ENCODE measurements at regions of chr17 and their contacts with region 1.

Region 1: DNA sequence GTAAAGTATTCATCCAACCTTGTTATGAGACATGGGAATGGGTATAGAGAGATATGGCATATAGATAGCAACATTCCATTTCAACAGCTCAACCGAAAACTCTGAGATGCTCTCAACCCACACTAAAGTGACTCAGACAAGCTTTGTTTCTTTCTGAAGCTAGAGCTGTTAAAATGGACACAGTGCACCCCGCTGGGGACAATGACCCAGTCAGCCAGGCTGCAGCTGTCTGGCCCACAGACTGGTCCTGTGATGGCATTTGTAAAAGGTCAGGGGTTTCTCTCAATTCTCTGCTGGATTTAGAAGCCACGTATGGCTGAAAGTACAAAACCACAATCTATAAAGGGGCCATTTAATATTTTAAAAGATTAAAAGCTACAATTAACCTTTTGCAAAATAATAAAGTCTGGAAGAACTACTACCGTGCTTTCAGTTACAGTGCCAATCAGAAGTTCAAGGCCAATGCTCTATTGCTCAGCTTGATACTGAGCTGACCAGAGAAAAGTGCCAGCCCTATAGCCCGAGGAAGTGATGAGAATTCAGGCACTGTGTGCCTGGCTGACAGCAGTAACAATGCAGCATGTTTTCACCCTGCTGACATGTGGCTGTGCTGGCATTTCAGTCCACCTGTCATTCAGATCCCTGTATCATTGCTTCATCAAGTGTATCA is 60.2 kb downstream of the TEX2 start:
- DNase-seq: no peak
- ATAC-seq: peak in 7 of 8 donors; percentile 64 to 83 (median 74)
- H3K4me3 ChIP-seq: no peak overlapping the region
- H3K27ac ChIP-seq: peak overlapping the region in 9 of 10 donors; percentile 35 to 72 (median 53)
- H3K4me1 ChIP-seq: peaks cover 9 to 57% (median 40%) of the 10 kb centered on the region in 9 donors
- H3K27me3 ChIP-seq: no peaks in the 10 kb centered on the region
- CTCF ChIP-seq: no peak

Region 2: GRCh38 chr17:64145757-64146417 is 56.9 kb before region 1 on chr17:
- intact Hi-C with region 1: no loop called
- DNase-seq: peak; percentile 94 to 98
- ATAC-seq: peak; percentile 95 to 97 (median 96)
- H3K4me3 ChIP-seq: peak overlapping the region; percentile 64 to 94 (median 76)
- H3K27ac ChIP-seq: peak overlapping the region; percentile 85 to 99 (median 96)
- H3K4me1 ChIP-seq: peaks cover 6 to 45% (median 38%) of the 10 kb centered on the region in 9 donors
- H3K27me3 ChIP-seq: no peaks in the 10 kb centered on the region
- CTCF ChIP-seq: peak in 2 of 9 donors; percentile 9 to 28

Region 3: DNA sequence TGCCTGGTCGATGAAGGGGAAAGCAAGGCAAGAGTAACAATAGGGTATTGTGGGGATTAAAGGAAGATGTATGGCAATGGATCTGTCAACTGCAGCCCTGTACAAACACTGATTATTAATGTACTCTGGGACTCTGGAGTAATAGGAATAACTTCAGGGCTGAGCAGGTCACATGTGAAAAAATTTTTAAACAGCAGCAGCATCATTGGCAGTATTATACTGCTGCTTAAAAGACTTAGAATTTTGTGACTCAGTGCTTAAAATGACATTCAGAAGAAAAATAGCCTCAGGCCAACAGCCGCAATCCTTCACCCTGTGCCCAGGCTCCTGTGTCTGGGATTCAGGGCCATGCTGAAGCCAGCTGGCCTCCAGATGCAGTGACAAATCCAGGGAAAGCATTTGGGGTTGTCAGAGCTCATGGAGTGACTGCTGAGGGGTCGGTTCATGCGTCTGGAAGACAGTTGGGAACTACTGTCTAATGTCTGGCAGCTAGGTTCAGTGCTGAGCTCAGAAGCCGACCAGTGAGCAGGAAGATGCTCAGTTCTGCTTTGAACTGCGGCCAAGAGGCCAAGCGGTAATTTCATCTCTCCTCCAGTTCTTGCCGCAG is 38.0 kb after region 1 on chr17:
- intact Hi-C with region 1: loop called in 1 of 10 experiments (anchors 5 kb)
- DNase-seq: peak; percentile 34 to 58
- ATAC-seq: peak; percentile 45 to 85 (median 74)
- H3K4me3 ChIP-seq: no peak overlapping the region
- H3K27ac ChIP-seq: peak overlapping the region in 9 of 10 donors; percentile 50 to 83 (median 62)
- H3K4me1 ChIP-seq: peaks cover 8 to 64% (median 41%) of the 10 kb centered on the region in 9 donors
- H3K27me3 ChIP-seq: no peaks in the 10 kb centered on the region
- CTCF ChIP-seq: no peak

Region 4: DNA sequence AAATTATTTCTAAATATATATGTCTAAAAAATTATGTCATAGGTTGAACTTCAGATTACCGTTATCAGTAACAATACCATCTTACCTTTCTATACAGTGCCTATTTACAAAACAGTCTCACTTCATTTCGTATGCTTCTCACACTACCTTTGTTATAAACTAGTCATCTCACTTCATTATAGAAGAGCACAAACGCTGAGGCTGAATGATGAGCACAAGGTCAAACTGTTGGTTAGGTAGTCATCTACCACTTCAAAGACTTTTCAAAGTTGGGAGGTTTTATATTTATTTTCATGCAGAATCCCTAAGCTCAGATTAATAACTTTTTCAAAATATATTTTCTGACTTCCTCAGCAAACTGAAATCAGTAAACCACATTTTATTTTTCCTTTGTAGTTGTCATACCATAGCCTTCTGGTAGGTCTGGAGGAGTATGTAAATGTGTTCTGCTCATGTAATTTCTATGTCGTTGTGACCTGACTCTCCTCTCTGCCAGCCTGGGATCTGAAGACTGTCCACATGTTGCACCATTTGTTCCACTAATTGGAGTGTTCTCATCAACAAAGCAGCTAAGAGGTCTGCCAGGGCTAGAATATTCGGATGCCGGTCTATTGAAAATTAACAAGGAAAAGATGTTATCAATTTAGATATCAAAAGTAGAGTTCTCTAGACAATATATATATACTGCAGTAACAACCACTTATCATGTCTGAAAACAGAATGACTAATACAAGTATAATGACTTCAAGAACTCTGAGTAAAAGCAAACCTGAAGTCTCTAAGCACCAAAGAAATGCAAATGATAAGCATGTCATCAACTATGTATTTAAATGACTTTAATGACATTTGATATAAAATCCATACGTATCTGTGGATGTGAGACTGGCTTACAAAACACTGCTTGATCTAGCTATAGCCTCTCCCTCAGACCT is 377.8 kb after region 1 on chr17:
- intact Hi-C with region 1: no loop called
- DNase-seq: no peak
- ATAC-seq: no peak
- H3K4me3 ChIP-seq: no peak overlapping the region
- H3K27ac ChIP-seq: no peak overlapping the region
- H3K4me1 ChIP-seq: no peaks in the 10 kb centered on the region
- H3K27me3 ChIP-seq: no peaks in the 10 kb centered on the region
- CTCF ChIP-seq: no peak

Measured in heart right ventricle (tissue), 16 donors.